Psoas muscle (tissue), 8 donors: ENCODE measurements at regions of chr6 and their contacts with region 1.

Region 1: DNA sequence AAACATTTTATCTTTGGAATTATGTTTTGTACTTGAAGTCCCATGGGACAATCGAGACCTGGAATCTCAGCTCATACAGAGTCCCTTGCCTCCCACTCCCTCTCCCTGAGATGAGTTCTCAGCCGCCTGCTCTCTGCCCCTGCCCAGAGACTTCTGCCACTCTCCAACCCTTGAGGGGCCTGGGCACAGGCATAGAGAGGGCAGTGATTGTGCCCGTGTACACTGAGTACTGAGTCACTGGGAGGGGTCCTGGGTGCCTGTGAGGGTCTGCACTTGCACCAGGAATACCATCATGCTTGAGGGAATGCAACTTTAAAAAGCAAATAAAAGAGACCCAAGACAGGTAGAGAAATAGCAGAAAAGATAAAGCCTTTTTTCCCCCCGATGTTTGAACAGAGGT is 453.8 kb upstream of the HS3ST5 start:
- DNase-seq: no peak
- ATAC-seq: no peak
- H3K4me3 ChIP-seq: no peak overlapping the region
- H3K27ac ChIP-seq: no peak overlapping the region
- H3K4me1 ChIP-seq: no peaks in the 10 kb centered on the region
- H3K27me3 ChIP-seq: no peaks in the 10 kb centered on the region
- CTCF ChIP-seq: no peak

Region 2: DNA sequence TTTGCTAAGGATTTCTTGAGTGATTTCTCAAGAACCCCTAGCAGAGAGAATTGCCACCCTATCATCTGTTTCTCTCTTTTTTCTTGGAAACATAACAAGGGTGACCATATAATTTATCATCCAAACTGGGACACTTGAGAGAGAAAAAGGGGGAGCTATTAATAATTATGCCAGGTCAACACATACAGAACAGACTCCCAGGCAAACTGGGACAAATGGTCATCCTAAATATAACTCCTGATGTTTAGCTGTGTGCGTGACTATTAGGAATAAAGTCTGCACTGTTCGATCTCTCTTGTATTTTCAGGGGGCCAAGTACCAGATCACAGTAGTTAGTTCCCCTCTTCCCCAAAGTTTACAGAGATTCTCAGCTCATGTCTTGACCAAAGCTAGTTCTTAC is 442.1 kb before region 1 on chr6:
- intact Hi-C with region 1: loop called in 1 of 2 experiments (anchors 5 kb)
- DNase-seq: no peak
- ATAC-seq: no peak
- H3K4me3 ChIP-seq: no peak overlapping the region
- H3K27ac ChIP-seq: no peak overlapping the region
- H3K4me1 ChIP-seq: no peaks in the 10 kb centered on the region
- H3K27me3 ChIP-seq: no peaks in the 10 kb centered on the region
- CTCF ChIP-seq: no peak